GM12878 (cell line): ENCODE measurements at regions of chr17 and their contacts with region 1.

Region 1: GRCh38 chr17:28854457-28855350 is at the start of gene ERAL1:
- DNase-seq: peak; percentile 73
- ATAC-seq: peak; percentile 100
- H3K4me3 ChIP-seq: peak within 1 kb of the TSS; percentile 78
- H3K27ac ChIP-seq: peak within 1 kb of the TSS; percentile 86
- H3K4me1 ChIP-seq: peaks cover 14% of the 10 kb centered on the region
- H3K27me3 ChIP-seq: no peaks in the 10 kb centered on the region
- CTCF ChIP-seq: no peak
- EP300 ChIP-seq: no peak
- POLR2A ChIP-seq: peak; percentile 95
- RAD21 ChIP-seq: no peak
- polyA plus RNA-seq, gene ERAL1: 165 to 175 TPM

Region 2: DNA sequence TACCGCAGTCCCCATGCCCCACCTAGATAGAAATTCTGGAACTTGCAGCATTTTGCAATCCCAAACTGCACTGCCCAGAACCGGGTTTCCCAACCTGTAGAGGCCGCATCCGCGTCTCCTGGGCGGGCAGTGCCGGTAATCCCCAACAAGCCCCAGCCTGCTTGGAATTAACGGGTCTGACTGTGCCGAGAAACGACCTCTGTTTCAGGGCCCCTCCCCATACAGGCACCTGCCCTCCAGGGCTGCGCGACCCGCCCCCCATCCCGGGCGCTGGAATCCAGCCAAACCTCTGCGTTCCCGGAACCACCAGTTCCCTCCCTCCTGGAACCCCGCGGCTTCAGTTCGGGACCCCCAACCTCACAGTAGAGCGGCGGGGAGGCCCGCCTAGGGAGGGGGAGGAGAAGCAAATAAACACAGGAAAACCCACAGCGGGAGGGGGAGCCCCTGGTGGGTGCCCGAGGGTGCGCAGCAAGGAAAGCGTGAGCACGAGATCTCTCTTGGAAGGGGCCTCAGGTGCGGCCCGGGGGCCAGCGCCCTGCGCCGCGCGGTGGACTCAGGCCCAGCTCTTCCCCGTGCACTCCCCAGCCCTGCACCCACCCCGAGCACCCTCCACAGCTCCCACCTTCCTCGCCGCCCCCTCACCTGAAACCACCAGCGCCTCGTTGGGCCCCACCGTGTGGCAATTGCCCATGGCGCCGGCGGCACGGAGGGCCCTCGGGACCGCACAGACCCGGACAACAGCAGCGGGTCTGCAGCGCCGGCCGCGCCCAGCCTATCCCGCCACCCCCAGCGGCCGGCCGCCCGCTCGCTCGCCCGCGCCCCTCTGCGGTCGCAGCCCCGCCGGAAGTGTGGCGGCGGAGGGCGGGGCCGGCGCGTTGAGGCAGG is 42.4 kb after region 1 on chr17 and contains the start of gene FLOT2:
- CTCF ChIA-PET with region 1: interaction called, 57 read pairs
- POLR2A ChIA-PET with region 1: interaction called, 15 read pairs
- RAD21 ChIA-PET with region 1: interaction called, 16 read pairs
- SMC1A ChIA-PET with region 1: interaction called, 12 read pairs
- in situ Hi-C with region 1: no loop called
- intact Hi-C with region 1: no loop called
- DNase-seq: no peak
- ATAC-seq: peak; percentile 43
- H3K4me3 ChIP-seq: peak within 1 kb of the TSS; percentile 92
- H3K27ac ChIP-seq: peak within 1 kb of the TSS; percentile 72
- H3K4me1 ChIP-seq: peaks cover 39% of the 10 kb centered on the region
- H3K27me3 ChIP-seq: no peaks in the 10 kb centered on the region
- CTCF ChIP-seq: peak in 2 of 3 experiments; percentile 11 to 17; a peak in 2 of 6 replicates
- EP300 ChIP-seq: no peak
- POLR2A ChIP-seq: peak; percentile 71
- RAD21 ChIP-seq: no peak
- polyA plus RNA-seq, gene FLOT2: 56.8 to 121 TPM

Region 3: DNA sequence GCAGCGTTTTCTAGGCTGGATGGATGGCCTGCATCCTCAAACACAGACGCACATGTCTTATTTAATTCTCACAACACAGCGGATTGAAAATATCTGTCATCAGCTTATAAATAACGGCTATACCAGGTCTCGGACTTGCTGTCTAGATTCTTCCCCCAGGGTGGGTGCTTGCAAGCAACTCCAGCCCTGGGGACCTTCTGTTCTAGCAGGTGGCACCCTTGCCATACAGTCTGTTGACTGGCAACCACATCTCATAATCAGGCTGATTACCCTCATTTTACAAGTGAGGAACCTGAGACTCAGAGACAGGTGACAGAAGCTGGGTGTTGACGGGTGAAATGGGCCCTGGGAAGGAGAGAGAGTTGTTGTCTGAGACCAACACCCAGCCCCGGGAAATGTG is 167.4 kb after region 1 on chr17:
- CTCF ChIA-PET with region 1: no interaction called
- POLR2A ChIA-PET with region 1: no interaction called
- RAD21 ChIA-PET with region 1: no interaction called
- SMC1A ChIA-PET with region 1: no interaction called
- in situ Hi-C with region 1: no loop called
- intact Hi-C with region 1: no loop called
- DNase-seq: no peak
- ATAC-seq: no peak
- H3K4me3 ChIP-seq: no peak overlapping the region
- H3K27ac ChIP-seq: no peak overlapping the region
- H3K4me1 ChIP-seq: no peaks in the 10 kb centered on the region
- H3K27me3 ChIP-seq: peaks cover 2 to 6% of the 10 kb centered on the region in 2 experiments; a peak in 3 of 4 replicates
- CTCF ChIP-seq: no peak
- EP300 ChIP-seq: no peak
- POLR2A ChIP-seq: no peak
- RAD21 ChIP-seq: no peak